Right cardiac atrium (tissue), 5 donors: ENCODE measurements at regions of chr21 and their contacts with region 1.

Region 1: DNA sequence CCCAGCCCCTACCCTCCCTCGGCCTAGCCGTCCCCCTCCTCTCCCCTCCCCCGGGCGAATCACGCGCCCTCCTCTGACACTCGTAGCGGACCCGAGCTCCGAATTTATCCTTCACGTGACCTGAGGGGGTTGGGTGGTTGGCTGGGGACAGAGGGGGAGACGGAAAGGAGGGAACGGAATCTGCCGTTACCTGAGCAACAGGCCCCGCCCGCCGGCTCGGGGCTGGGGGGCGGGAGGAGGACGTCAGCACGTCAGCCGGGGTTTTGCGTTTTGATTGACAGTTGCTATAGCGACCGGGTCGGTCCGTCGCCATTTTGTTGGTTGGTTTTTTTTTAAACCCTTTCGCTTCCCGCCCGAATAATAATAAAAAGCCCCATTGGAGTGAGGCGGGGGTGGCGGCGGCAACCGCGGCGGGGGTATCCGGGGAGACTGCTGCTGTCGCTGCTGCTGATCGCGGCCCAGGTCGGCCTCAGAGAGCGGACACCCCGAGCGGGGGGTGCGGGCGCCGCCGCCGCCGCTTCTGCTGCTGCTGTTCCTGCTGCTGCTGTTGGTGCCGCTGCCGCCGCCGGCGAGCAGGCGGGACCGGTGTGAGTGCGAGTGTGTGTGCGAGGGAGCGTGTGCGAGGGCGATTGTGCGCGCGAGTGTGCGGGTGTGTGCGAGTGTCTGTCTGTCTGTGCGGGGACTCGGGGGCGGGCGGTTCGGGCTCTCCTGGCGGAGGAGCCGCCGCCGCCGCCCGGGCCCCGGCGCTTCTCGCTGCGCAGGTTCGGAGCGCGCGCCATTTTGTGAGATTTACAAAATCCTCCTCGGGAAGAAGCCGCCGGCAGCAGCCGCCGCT is at the start of gene DYRK1A:
- DNase-seq: peak; percentile 99
- ATAC-seq: peak; percentile 95
- H3K4me3 ChIP-seq: peak within 1 kb of the TSS; percentile 96
- H3K27ac ChIP-seq: peak within 1 kb of the TSS; percentile 99
- H3K4me1 ChIP-seq: no peaks in the 10 kb centered on the region
- H3K27me3 ChIP-seq: no peaks in the 10 kb centered on the region
- total RNA-seq, gene DYRK1A: 67.6 to 76.9 (median 73.4) TPM

Region 2: DNA sequence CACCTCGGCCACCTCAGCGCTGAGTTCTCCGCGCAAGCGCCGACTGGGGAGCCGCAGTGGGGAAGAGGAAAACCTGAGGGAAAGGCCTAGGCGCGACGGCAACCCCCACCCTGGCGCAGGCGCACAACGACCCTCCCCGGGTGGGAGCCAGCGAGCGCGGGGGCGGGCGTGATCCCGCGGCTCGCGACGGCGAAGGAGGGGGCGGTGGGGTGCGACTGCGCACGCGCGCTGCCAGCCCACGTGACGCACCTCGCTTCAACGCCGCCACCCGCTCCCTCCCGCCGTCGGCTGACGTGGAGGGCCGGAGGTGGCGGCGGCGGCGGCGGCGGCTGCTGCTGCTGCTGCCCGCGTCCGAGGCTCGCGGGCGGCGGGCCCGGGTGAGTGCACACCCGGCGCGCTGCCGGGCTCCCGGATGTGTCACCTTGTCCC is 293.7 kb before region 1 on chr21 and contains the starts of genes PIGP and TTC3:
- intact Hi-C with region 1: no loop called
- DNase-seq: peak; percentile 96 to 99 (median 98)
- ATAC-seq: peak; percentile 91 to 93
- H3K4me3 ChIP-seq: peak within 1 kb of the TSS; percentile 56
- H3K27ac ChIP-seq: peak within 1 kb of the TSS; percentile 86
- H3K4me1 ChIP-seq: peaks cover 3% of the 10 kb centered on the region
- H3K27me3 ChIP-seq: no peaks in the 10 kb centered on the region
- total RNA-seq, gene PIGP: 34.5 to 42.5 (median 37.8) TPM
- total RNA-seq, gene TTC3: 62.5 to 77.8 (median 70.9) TPM

Region 3: GRCh38 chr21:37220981-37221664 is 145.6 kb before region 1 on chr21:
- intact Hi-C with region 1: loop called in 1 of 4 experiments (anchors 10 kb)
- DNase-seq: peak; percentile 97 to 99 (median 98)
- ATAC-seq: peak; percentile 97 to 98
- H3K4me3 ChIP-seq: peak overlapping the region; percentile 42
- H3K27ac ChIP-seq: peak overlapping the region; percentile 48
- H3K4me1 ChIP-seq: no peaks in the 10 kb centered on the region
- H3K27me3 ChIP-seq: no peaks in the 10 kb centered on the region

Region 4: GRCh38 chr21:37237346-37237745 is 129.4 kb before region 1 on chr21:
- intact Hi-C with region 1: no loop called
- DNase-seq: no peak
- ATAC-seq: no peak
- H3K4me3 ChIP-seq: no peak overlapping the region
- H3K27ac ChIP-seq: no peak overlapping the region
- H3K4me1 ChIP-seq: peaks cover 2% of the 10 kb centered on the region
- H3K27me3 ChIP-seq: no peaks in the 10 kb centered on the region

Region 5: GRCh38 chr21:37257967-37258877 is 108.5 kb before region 1 on chr21:
- intact Hi-C with region 1: loop called in 2 of 4 experiments (anchors 10 kb)
- DNase-seq: peak; percentile 64 to 81 (median 76)
- ATAC-seq: peak; percentile 74 to 75
- H3K4me3 ChIP-seq: peak overlapping the region; percentile 44
- H3K27ac ChIP-seq: peak overlapping the region; percentile 42
- H3K4me1 ChIP-seq: peaks cover 3% of the 10 kb centered on the region
- H3K27me3 ChIP-seq: no peaks in the 10 kb centered on the region

Region 6: DNA sequence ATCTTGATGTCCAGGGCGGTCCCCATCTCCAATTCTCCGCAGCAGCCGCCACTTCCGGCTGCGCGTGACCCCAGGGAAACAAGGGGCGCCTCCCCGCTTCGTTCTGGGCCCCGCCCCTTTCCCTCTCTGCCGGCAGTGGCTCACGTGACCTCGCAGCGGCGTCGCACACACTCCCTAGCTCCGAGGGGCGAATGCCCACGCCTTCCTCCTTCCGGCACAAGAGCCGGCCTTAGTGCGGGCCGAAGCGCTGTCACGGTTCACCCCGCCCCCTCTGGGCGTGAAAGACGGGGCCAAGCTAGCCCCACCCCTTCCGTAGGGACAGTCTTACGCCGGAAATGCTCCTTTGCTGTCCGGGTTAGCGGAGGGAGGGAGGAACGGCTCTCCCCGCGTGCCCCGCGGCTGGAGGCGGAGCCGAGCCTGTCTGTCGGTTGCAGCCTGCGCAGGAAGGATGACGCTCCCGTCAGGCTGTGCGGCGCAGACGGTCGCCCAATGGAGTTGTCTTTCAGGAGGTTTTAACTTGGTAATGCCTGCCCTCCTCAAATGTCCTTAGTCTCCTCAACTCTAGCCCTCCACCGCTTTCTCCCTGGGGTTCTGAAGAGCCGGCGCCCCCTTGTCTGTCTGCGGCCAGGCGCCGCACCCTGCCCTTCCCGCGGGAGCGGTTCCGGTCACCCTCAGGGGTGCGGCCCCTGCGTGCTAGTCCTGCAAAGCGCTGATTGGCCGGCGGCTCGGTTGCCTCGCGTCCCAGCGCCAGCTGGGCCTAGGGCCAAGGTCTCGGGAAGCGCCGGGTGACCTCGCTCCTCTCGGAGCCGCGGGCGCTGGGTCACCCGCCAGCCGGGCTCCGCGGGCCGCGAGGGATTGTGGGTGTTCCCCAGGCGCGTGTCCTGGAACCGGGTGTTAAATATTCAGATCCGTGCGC is 99.2 kb before region 1 on chr21 and contains the start of gene VPS26C:
- intact Hi-C with region 1: loop called in 3 of 4 experiments (anchors 5 to 10 kb)
- DNase-seq: peak; percentile 99
- ATAC-seq: peak; percentile 97 to 98
- H3K4me3 ChIP-seq: peak within 1 kb of the TSS; percentile 81
- H3K27ac ChIP-seq: peak within 1 kb of the TSS; percentile 95
- H3K4me1 ChIP-seq: peaks cover 2% of the 10 kb centered on the region
- H3K27me3 ChIP-seq: no peaks in the 10 kb centered on the region
- total RNA-seq, gene VPS26C: 36.7 to 40.7 (median 39.5) TPM

Region 7: DNA sequence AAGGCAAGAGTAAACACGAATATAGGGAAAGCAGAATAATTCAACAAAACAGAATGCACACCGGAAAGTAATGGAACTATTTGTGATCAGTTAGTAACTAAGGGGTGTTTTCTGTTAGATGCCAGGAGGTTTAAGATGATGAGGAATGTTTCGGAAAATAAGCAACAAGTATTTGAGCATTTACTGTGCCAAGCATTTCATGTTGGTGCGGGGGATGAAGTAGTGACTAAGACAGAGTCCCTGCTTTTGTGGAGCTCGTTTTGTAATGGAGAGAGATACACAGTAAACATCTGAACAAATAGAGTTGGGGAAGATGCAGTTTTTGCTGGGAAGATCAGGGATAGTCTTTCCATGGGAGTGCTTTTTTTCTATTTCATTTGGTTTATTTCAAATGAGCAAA is 78.5 kb after region 1 on chr21:
- intact Hi-C with region 1: loop called in 2 of 4 experiments (anchors 10 kb)
- DNase-seq: no peak
- ATAC-seq: peak in 1 of 2 donors; percentile 34
- H3K4me3 ChIP-seq: no peak overlapping the region
- H3K27ac ChIP-seq: no peak overlapping the region
- H3K4me1 ChIP-seq: peaks cover 12% of the 10 kb centered on the region
- H3K27me3 ChIP-seq: no peaks in the 10 kb centered on the region

Region 8: GRCh38 chr21:37452227-37452626 is 85.5 kb after region 1 on chr21:
- intact Hi-C with region 1: loop called in 2 of 4 experiments (anchors 10 kb)
- DNase-seq: peak in 2 of 3 donors; percentile 25 to 51
- ATAC-seq: peak; percentile 74 to 85
- H3K4me3 ChIP-seq: no peak overlapping the region
- H3K27ac ChIP-seq: peak overlapping the region; percentile 46
- H3K4me1 ChIP-seq: peaks cover 27% of the 10 kb centered on the region
- H3K27me3 ChIP-seq: no peaks in the 10 kb centered on the region

Region 9: DNA sequence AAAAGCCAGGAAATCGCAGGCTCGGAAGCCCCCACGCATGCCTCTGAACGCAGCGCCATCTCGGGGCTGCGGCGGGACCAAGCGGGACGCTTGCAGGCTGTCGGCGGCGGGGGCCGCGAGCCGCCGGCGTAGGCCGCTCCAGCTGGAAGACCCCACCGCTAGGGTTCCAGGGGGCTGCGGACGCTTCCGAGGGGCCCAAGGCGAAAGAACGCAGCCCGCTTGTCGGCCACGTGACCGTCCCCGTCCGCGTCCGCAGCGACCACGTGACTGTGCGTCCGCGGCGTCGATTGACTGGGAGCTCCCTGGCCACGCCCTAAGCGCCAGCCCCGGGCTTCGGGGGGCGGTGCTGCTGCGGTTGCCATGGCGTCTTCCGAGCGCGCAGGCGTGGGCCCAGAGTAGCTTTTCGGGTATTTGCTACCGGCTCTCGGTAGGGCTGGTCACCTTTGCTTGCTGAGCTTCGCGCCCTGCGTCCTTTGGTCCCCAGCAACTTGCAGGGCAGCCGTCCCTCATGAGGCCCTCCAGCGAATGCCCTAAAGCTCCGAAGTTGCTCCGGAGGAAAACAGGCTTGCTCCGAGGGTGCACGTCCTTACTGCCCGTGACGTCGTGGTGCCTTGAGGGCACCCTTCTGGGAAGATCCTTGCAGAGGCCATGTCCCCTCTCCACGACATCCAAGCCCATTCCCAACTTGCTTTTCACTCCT is 197.1 kb after region 1 on chr21:
- intact Hi-C with region 1: loop called in 2 of 4 experiments (anchors 10 kb)
- DNase-seq: peak; percentile 95 to 98 (median 98)
- ATAC-seq: peak; percentile 97
- H3K4me3 ChIP-seq: peak overlapping the region; percentile 49
- H3K27ac ChIP-seq: peak overlapping the region; percentile 89
- H3K4me1 ChIP-seq: peaks cover 2% of the 10 kb centered on the region
- H3K27me3 ChIP-seq: no peaks in the 10 kb centered on the region